CD14-positive monocyte (primary cell): ENCODE measurements at regions of chr2 and their contacts with region 1.

Region 1: DNA sequence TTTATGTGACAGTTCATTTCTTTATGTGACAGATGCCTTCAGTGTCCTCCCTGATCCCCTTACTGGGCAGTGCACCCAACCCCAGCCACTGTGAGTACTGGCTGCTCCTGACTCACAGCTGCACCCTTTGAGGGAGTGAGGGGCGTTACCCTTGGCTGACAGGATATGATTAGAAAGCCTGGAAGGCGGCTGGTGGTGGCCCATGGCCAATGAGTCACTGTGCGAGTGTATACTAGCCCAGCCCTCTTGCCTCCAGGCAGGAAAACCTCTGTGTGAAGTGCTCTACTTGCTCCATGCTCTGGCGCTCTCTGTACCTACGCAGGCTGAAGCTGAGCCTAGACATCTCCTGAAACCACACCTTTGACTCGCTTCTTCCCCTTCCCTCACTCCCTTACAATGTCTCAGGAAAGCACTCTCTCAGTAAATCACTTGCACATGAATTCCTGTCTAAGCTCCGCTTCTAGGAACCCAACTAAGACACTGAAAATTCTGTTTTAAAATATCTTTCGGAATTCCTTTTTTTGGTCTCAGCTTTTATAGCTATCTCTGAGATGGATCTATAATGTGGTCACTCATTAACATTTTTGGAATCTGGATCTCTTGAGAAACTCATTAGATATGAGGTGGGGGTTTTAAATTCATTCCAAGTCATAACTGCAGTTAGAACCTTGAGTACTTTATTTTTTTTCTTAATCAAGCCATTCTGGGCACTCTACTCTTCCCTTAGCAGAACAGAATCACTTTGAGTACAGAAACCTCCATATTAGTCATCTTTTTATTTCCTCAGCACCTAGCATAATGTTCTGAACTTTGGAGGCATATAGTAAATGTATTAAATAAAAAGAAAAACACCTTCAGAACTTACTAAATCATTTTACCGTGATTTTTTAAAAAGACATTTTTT is 25.3 kb upstream of the STAM2 start:
- DNase-seq: peak; percentile 11 to 48 (median 31)
- H3K4me3 ChIP-seq: no peak overlapping the region
- H3K4me3 Mint-ChIP-seq: no peak overlapping the region
- H3K27ac ChIP-seq: no peak overlapping the region
- H3K27ac Mint-ChIP-seq: peak overlapping the region in 2 of 7 donors; percentile 46 to 63
- H3K4me1 ChIP-seq: no peaks in the 10 kb centered on the region
- H3K4me1 Mint-ChIP-seq: peaks cover 5% of the 10 kb centered on the region
- H3K27me3 ChIP-seq: no peaks in the 10 kb centered on the region
- H3K27me3 Mint-ChIP-seq: peaks cover 0 to 4% (median 2%) of the 10 kb centered on the region in 3 donors
- CTCF ChIP-seq: no peak

Region 2: GRCh38 chr2:150847578-150847977 is 1353.2 kb before region 1 on chr2:
- intact Hi-C with region 1: no loop called
- DNase-seq: no peak
- H3K4me3 ChIP-seq: no peak overlapping the region
- H3K4me3 Mint-ChIP-seq: no peak overlapping the region
- H3K27ac ChIP-seq: no peak overlapping the region
- H3K27ac Mint-ChIP-seq: no peak overlapping the region
- H3K4me1 ChIP-seq: no peaks in the 10 kb centered on the region
- H3K4me1 Mint-ChIP-seq: no peaks in the 10 kb centered on the region
- H3K27me3 ChIP-seq: no peaks in the 10 kb centered on the region
- H3K27me3 Mint-ChIP-seq: no peaks in the 10 kb centered on the region
- CTCF ChIP-seq: no peak

Region 3: GRCh38 chr2:152319831-152320570 is 119.2 kb after region 1 on chr2:
- intact Hi-C with region 1: loop called in 1 of 2 experiments (anchors 10 kb)
- DNase-seq: peak in 2 of 3 donors; percentile 9 to 57
- H3K4me3 ChIP-seq: no peak overlapping the region
- H3K4me3 Mint-ChIP-seq: no peak overlapping the region
- H3K27ac ChIP-seq: no peak overlapping the region
- H3K27ac Mint-ChIP-seq: peak overlapping the region in 2 of 7 donors; percentile 12 to 48
- H3K4me1 ChIP-seq: peaks cover 0 to 4% of the 10 kb centered on the region in 2 donors
- H3K4me1 Mint-ChIP-seq: peaks cover 2% of the 10 kb centered on the region
- H3K27me3 ChIP-seq: no peaks in the 10 kb centered on the region
- H3K27me3 Mint-ChIP-seq: peaks cover 1 to 6% (median 4%) of the 10 kb centered on the region in 3 donors
- CTCF ChIP-seq: no peak